ENCODE measurements at regions of chr17 and their contacts with region 1.

Region 1: DNA sequence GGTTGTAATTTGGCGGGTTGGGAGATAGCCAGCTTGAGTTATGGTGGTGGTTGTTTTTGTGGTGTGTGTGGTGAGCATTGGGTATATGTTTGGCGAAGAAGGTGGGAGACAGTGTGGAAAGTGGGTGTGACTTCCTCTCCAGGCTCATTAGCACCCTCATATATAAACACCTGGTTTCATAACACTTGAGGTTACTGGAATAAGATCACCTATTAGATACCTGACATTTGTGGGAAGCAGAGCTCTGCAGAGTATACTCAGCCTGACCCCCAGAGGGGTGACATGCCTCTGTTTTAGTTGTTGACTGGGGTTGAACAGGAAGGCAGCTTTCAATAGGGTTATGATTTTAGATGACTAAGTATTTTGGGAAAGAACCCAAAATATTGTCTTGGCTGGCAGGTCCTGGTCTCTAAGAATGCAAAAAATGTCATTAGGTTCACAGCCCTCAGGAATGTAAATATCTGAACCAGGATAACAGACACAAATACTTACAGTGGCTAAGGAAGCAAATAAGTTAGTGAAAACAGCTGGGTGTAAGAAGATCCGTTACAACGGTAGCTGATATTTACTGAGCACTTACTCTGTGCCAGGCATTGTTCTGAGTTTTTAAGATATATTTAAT is 18.3 kb upstream of the EFCAB13 start:
- DNase-seq: peak; percentile 98
- H3K4me3 ChIP-seq: peak overlapping the region in 1 of 3 experiments; percentile 1
- H3K27ac ChIP-seq: peak overlapping the region; percentile 93
- H3K4me1 ChIP-seq: peaks cover 22% of the 10 kb centered on the region
- H3K27me3 ChIP-seq: no peaks in the 10 kb centered on the region
- CTCF ChIP-seq: no peak
- POLR2A ChIP-seq: no peak

Region 2: DNA sequence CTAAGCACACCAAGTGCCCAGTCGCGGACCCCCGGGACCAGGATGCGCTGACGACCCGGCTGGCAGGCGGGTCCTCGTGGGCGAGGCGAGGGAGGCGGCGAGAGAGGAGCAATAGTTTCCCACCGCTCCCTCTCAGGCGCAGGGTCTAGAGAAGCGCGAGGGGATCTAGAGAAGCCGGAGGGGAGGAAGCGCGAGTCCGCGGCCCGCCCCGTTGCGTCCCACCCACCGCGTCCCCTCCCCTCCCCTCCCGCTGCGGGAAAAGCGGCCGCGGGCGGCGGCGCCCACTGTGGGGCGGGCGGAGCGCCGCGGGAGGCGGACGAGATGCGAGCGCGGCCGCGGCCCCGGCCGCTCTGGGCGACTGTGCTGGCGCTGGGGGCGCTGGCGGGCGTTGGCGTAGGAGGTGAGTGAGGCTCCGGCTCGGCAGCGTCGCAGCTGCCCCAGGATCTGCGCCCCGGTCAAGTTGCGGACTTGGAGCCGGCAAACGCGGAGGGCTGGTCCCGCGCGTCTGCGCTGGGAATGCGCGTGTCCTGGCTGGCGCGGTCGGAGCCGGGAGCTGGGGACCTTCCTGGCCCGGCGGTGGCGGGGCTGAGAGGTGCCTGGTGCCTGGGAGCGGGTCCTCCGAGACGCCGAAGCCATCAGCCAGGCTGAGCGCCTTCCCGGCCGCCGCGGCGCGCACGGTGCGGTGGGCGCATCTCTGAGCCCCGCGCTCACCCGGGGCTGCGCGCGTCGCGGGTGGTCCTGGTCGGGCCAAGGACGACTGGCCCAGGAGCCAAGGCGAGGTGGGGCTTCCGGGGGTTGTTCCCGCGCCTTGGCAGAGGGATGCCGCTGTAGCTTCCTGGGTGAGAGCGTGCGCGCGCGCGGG is 51.6 kb before region 1 on chr17 and contains the start of gene ITGB3:
- CTCF ChIA-PET with region 1: interaction called, 3 read pairs
- POLR2A ChIA-PET with region 1: no interaction called
- dilution Hi-C with region 1: no loop called
- intact Hi-C with region 1: loop called (anchors 1 kb)
- DNase-seq: peak; percentile 83
- H3K4me3 ChIP-seq: peak within 1 kb of the TSS; percentile 61 to 87 (median 68)
- H3K27ac ChIP-seq: peak within 1 kb of the TSS; percentile 37
- H3K4me1 ChIP-seq: peaks cover 38% of the 10 kb centered on the region
- H3K27me3 ChIP-seq: no peaks in the 10 kb centered on the region
- CTCF ChIP-seq: peak; percentile 55 to 66
- POLR2A ChIP-seq: peak; percentile 60
- total RNA-seq, gene ITGB3: 49.9 and 60.0 TPM in 2 replicates

Region 3: DNA sequence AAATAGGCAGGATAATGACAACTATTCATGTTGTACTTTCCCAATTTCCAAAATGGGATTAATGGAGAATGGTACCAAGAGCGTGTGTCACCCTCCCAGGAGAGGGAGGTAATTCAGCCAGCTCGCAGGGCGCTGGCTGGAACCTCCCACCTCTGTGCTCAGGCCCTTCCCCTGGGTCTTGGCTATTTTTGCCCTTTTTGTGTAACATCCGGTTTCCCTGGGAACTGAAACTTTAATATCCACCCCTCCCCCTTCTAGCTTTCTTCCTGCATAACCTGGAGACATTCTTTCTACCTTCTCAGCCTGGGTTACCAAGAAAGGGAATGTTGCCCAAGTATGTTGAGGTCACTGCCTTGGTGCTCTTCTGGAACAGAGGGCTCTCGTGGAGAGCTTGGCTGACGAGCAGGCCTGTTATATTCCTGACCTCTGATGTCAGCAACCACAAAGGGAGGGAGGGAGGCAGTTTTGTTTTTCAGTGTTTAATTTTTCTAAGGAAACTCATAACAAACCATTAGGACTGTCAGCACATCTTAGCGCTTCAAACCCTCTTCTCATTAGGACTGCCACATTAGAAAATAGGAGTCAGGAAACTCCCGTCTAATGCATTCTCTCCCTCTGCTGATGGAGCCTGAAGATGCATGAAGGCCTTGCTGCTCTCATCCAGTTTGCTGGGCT is 26.2 kb before region 1 on chr17:
- CTCF ChIA-PET with region 1: interaction called, 3 read pairs
- POLR2A ChIA-PET with region 1: no interaction called
- dilution Hi-C with region 1: no loop called
- intact Hi-C with region 1: loop called (anchors 1 kb)
- DNase-seq: peak; percentile 76
- H3K4me3 ChIP-seq: no peak overlapping the region
- H3K27ac ChIP-seq: peak overlapping the region; percentile 68
- H3K4me1 ChIP-seq: peaks cover 21% of the 10 kb centered on the region
- H3K27me3 ChIP-seq: no peaks in the 10 kb centered on the region
- CTCF ChIP-seq: no peak
- POLR2A ChIP-seq: no peak

Region 4: DNA sequence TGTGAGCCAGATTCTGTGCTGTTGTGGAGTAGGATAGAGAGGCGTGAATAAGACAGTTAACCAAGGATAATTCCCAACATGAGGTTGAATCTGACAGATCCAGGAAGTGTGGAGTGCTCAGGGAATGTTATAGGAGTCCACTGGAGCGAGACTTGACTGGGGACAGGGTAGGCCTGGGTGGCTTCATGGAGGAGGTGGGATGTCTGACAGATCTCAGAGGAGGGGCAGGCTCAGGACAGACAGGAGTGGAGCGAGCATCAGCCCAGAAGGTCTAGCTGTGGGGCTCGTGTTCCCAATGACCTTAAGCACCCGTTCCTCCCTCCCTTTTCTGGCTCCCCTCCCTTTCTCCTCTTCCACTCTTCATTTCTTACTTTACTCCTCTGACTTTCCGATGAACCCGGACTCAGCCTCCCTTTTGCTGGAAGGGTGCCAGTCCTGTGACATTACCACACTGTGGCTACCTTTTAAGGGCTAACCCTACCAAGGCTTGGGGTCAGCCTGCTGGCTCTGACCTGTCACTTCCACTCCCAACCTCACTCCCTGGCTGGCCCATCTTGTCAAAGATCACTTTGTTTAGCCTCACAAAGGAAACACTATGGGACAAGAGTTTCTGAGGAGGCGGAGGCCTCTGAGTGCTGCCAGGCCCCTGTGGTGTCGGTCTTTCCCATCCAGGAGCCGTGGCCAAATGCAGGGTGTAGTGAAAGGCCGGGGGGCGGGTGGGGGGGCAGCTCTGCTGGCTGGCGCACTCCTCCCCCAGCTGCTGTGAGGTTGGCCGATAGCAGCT is 10.2 kb before region 1 on chr17:
- CTCF ChIA-PET with region 1: interaction called, 10 read pairs
- POLR2A ChIA-PET with region 1: interaction called, 6 read pairs
- dilution Hi-C with region 1: no loop called
- intact Hi-C with region 1: loop called (anchors 1 kb)
- DNase-seq: no peak
- H3K4me3 ChIP-seq: no peak overlapping the region
- H3K27ac ChIP-seq: peak overlapping the region; percentile 75
- H3K4me1 ChIP-seq: peaks cover 15% of the 10 kb centered on the region
- H3K27me3 ChIP-seq: no peaks in the 10 kb centered on the region
- CTCF ChIP-seq: no peak
- POLR2A ChIP-seq: no peak

Region 5: GRCh38 chr17:47465165-47465564 is 159.8 kb after region 1 on chr17:
- CTCF ChIA-PET with region 1: no interaction called
- POLR2A ChIA-PET with region 1: no interaction called
- dilution Hi-C with region 1: no loop called
- intact Hi-C with region 1: no loop called
- DNase-seq: no peak
- H3K4me3 ChIP-seq: no peak overlapping the region
- H3K27ac ChIP-seq: no peak overlapping the region
- H3K4me1 ChIP-seq: no peaks in the 10 kb centered on the region
- H3K27me3 ChIP-seq: no peaks in the 10 kb centered on the region
- CTCF ChIP-seq: no peak
- POLR2A ChIP-seq: no peak

Measured in endothelial cell of umbilical vein (primary cell).